Heart left ventricle (tissue), 16 donors: ENCODE measurements at regions of chr18 and their contacts with region 1.

Region 1: DNA sequence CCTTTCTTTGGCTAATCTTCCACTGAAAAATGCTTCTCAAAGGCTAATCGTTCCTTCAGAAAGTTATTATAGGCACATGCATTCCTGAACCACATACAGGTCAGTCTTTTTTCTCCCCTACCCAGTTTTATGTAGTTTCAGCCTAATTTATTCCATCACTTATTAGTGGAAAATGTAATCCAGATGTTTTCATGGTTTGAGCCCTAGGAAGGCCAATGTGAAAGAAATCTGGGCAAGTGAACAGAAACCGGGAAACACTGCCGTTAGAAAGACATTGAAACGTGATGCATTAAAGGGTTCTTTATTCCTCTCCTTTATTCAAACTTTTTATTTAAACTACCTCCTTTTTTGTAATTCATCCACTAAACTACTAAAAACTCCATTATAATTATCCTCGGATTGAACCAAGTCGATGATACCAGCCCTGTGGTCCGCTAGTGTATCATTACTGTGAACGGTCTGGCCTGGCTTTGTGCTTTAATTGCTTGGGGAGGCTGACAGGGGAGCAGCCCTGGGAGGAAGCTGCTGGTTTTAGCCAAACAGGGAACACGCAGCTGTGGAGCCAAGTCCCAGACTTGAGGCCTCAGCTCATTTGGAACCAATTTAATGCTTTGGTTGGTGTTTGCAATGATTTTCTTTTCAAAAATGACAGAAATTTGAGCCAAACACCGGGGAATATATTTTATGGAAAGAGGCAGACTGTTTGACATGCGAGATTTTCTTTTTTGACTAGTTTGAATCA is 149.2 kb downstream of the ARHGAP28 start:
- DNase-seq: peak in 1 of 5 donors; percentile 39
- ATAC-seq: peak in 1 of 4 donors; percentile 45
- H3K4me3 ChIP-seq: no peak overlapping the region
- H3K27ac ChIP-seq: no peak overlapping the region
- H3K4me1 ChIP-seq: peaks cover 0 to 10% (median 0%) of the 10 kb centered on the region in 12 donors
- H3K27me3 ChIP-seq: no peaks in the 10 kb centered on the region
- CTCF ChIP-seq: no peak
- POLR2A ChIP-seq: no peak

Region 2: DNA sequence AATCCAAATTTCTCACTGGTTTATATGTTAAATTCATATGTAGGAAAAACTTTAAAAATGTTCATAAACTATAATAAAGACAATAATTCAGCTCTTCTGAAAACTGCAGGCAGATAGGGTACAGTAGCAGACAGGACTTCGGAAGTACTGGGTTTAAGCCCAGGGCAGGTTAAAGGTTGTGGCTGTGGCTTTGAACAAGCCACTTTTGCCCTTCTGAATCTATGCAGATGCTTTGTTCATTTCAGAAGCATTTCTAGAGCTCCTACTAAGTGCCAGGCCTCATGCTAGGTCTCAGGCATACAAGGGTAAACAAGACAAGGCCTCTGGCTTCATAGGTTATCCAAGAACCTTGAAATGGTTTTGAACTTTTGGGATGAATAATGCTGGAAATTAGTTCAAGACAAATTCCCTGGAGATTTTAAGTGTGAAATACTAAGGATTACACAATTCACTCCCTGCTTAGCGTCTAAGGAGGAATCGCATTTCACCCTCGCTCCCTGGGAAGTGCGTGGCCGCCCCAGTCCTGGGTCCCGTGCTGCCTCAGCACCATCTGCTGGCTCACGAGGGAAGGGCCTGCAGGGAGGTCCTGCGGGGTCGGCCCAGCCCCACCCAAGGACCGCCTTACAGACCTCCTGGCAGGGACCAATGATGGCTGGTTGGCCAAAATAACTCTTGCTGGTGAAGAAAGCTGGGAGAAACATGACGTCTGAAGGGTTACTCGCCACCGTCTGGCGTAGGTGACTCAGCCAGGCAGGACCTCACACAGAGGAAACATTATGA is 396.3 kb before region 1 on chr18:
- intact Hi-C with region 1: no loop called
- DNase-seq: peak; percentile 50 to 86 (median 78)
- ATAC-seq: peak; percentile 86 to 99 (median 97)
- H3K4me3 ChIP-seq: no peak overlapping the region
- H3K27ac ChIP-seq: no peak overlapping the region
- H3K4me1 ChIP-seq: peaks cover 0 to 18% (median 0%) of the 10 kb centered on the region in 12 donors
- H3K27me3 ChIP-seq: no peaks in the 10 kb centered on the region
- CTCF ChIP-seq: peak; percentile 58 to 96 (median 82)
- POLR2A ChIP-seq: no peak

Region 3: GRCh38 chr18:6624271-6624660 is 254.5 kb before region 1 on chr18:
- intact Hi-C with region 1: loop called in 2 of 10 experiments (anchors 10 kb)
- DNase-seq: no peak
- ATAC-seq: peak in 1 of 4 donors; percentile 68
- H3K4me3 ChIP-seq: no peak overlapping the region
- H3K27ac ChIP-seq: peak overlapping the region in 5 of 12 donors; percentile 2 to 44 (median 42)
- H3K4me1 ChIP-seq: peaks cover 0 to 25% (median 5%) of the 10 kb centered on the region in 12 donors
- H3K27me3 ChIP-seq: no peaks in the 10 kb centered on the region
- CTCF ChIP-seq: no peak
- POLR2A ChIP-seq: no peak

Region 4: DNA sequence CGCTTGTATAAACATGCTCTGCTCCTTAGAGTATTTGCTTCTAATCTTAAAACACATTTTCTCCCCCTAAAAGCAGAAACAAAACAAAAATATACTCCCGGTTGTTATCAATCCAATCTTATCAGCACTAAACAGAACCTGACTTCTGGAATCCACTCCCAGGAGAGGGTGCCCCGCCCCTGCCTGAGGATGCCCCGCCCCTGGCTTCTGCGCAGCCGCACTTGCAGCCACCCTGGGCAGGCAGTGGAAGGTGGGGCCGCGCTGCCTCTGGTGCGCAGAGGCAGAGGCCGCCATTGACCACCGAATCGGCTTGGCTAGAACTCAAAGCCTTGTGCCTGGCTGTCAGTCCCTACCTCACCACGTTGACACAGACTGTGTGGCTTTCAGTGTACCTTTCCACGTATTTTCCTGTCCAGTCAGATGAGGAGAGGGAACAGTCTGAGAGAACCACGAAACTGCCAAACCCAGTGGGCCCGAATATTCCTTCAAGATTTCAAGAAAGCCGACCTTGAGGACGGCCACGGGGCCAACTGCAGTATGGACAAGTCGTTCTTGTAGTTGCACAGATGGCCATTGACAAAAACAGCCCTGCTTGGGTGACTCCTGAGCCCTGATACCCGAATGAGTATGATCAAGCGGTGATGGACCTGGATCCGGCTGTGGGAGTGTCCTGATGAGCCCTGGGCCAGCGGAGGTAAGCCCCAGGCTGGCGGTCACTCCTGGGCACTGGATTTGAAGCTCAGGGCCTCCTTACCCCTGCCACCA is 195.4 kb before region 1 on chr18:
- intact Hi-C with region 1: loop called in 1 of 10 experiments (anchors 10 kb)
- DNase-seq: peak in 3 of 5 donors; percentile 30 to 68 (median 52)
- ATAC-seq: peak; percentile 42 to 88 (median 64)
- H3K4me3 ChIP-seq: no peak overlapping the region
- H3K27ac ChIP-seq: peak overlapping the region in 1 of 12 donors; percentile 42
- H3K4me1 ChIP-seq: peaks cover 0 to 6% (median 0%) of the 10 kb centered on the region in 12 donors
- H3K27me3 ChIP-seq: no peaks in the 10 kb centered on the region
- CTCF ChIP-seq: no peak
- POLR2A ChIP-seq: no peak

Region 5: GRCh38 chr18:6929370-6930102 is 50.8 kb after region 1 on chr18:
- intact Hi-C with region 1: no loop called
- DNase-seq: no peak
- ATAC-seq: no peak
- H3K4me3 ChIP-seq: no peak overlapping the region
- H3K27ac ChIP-seq: no peak overlapping the region
- H3K4me1 ChIP-seq: no peaks in the 10 kb centered on the region
- H3K27me3 ChIP-seq: peaks cover 0 to 3% (median 0%) of the 10 kb centered on the region in 9 donors
- CTCF ChIP-seq: no peak
- POLR2A ChIP-seq: no peak